Mammary epithelial cell (primary cell): ENCODE measurements at regions of chr1 and their contacts with region 1.

Region 1: GRCh38 chr1:152034646-152035405 is 2.0 kb downstream of the S100A11 start:
- DNase-seq: peak; percentile 82
- H3K4me3 ChIP-seq: peak overlapping the region; percentile 90 to 99 (median 95)
- H3K27ac ChIP-seq: peak overlapping the region; percentile 95
- H3K4me1 ChIP-seq: peaks cover 23% of the 10 kb centered on the region
- H3K27me3 ChIP-seq: no peaks in the 10 kb centered on the region
- CTCF ChIP-seq: peak; percentile 71 to 81

Region 2: DNA sequence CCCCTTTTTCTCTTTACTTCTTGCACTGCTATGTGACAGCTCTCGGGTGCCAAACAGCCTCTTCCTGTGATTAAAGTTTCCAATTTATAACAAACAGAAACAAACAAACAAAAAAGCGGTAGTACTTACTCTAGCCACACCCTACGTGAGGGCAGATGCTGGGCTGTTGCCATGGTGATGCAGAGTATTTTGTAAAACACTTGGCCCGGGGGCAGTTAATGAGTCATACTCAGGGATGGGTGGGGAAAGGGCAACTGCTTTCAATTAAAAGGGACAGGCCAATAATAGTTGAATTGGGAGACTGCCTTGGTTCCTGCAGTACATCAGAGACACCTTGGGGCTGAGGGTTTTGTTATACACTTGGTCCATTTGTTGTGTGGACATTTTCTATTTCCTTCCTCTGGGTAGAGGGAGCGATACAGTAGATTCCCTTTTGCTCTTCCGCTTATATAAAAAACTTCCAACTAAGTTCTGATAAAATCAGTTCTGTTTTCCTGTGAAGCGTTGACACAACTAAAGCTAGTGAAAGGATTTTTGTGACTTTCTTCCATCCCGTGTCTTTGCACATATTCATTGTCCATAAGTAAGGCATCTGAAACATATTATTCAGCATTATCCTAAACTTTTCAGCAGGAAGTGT is 89.0 kb before region 1 on chr1:
- CTCF ChIA-PET with region 1: no interaction called
- dilution Hi-C with region 1: no loop called
- in situ Hi-C with region 1: no loop called
- intact Hi-C with region 1: loop called (anchors 1 kb)
- DNase-seq: peak; percentile 98
- H3K4me3 ChIP-seq: peak overlapping the region in 2 of 3 experiments; percentile 5 to 11
- H3K27ac ChIP-seq: peak overlapping the region; percentile 99
- H3K4me1 ChIP-seq: peaks cover 47% of the 10 kb centered on the region
- H3K27me3 ChIP-seq: no peaks in the 10 kb centered on the region
- CTCF ChIP-seq: no peak

Region 3: GRCh38 chr1:152013664-152014237 is 21.1 kb before region 1 on chr1:
- CTCF ChIA-PET with region 1: no interaction called
- dilution Hi-C with region 1: no loop called
- in situ Hi-C with region 1: no loop called
- intact Hi-C with region 1: loop called (anchors 1 kb)
- DNase-seq: no peak
- H3K4me3 ChIP-seq: no peak overlapping the region
- H3K27ac ChIP-seq: no peak overlapping the region
- H3K4me1 ChIP-seq: peaks cover 25% of the 10 kb centered on the region
- H3K27me3 ChIP-seq: no peaks in the 10 kb centered on the region
- CTCF ChIP-seq: peak; percentile 82 to 86